ENCODE measurements at regions of chr7 and their contacts with region 1.

Region 1: DNA sequence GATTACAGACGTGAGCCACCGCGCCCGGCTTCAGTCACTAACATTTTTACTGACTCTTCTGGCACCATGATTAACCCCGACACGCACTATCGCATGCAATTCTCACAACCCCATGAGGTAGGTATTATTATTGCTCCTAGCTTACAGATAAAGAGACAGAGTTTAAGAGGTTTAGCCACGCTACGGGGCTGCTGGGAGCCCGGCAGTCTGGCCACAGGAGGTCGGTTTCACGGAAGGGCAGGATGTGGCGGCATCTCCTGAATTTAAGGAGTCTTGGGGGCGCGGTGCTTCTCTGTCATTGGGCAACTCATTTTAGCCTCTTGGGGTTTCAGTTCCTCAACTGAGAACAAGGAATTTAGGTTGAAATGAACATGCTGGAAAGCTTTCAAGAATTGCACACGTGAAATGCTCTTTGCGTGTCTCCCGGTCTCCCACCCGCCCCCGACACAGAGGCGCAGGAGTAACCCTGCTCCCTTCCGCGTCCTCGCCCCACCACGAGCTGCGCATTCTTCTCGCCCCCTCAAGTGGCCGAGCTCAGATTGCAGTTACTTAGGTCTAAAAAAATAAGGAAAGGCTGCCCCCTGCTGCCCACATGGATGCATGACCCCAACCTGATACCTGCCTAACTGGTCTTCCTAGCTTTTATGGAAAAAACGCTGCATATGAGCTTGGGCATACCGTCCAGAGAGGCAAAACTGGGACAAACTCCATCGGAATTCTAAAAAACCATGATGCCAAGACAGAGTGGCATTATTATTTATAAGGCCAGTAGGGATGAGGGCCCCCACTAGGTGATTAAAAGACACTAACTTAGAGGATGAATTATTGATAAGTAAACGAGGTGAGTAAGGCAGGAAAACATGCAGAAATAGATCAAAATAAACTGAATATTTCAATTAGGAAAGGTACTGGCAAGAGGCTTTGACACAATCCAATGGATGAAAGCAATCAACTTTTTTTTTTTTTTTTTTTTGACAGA is 12.4 kb downstream of the PRSS2 start:
- DNase-seq: peak; percentile 88 to 93
- H3K4me3 ChIP-seq: peak overlapping the region; percentile 41; the same call in 1 of the 2 replicates
- H3K27ac ChIP-seq: no peak overlapping the region
- H3K4me1 ChIP-seq: peaks cover 10% of the 10 kb centered on the region
- H3K27me3 ChIP-seq: no peaks in the 10 kb centered on the region
- CTCF ChIP-seq: peak; percentile 99

Region 2: GRCh38 chr7:142357953-142358520 is 425.2 kb before region 1 on chr7:
- CTCF ChIA-PET with region 1: interaction called, 5 read pairs
- POLR2A ChIA-PET with region 1: no interaction called
- intact Hi-C with region 1: loop called (anchors 1 kb)
- DNase-seq: peak; percentile 71 to 75
- H3K4me3 ChIP-seq: peak overlapping the region; percentile 27; the same call in 1 of the 2 replicates
- H3K27ac ChIP-seq: peak overlapping the region; percentile 0; the same call in 1 of the 2 replicates
- H3K4me1 ChIP-seq: peaks cover 28% of the 10 kb centered on the region
- H3K27me3 ChIP-seq: no peaks in the 10 kb centered on the region
- CTCF ChIP-seq: peak; percentile 98

Region 3: GRCh38 chr7:142478479-142479072 is 304.6 kb before region 1 on chr7:
- CTCF ChIA-PET with region 1: interaction called, 17 read pairs
- POLR2A ChIA-PET with region 1: no interaction called
- intact Hi-C with region 1: loop called (anchors 1 kb)
- DNase-seq: peak; percentile 58 to 74
- H3K4me3 ChIP-seq: no peak overlapping the region
- H3K27ac ChIP-seq: no peak overlapping the region
- H3K4me1 ChIP-seq: peaks cover 16% of the 10 kb centered on the region
- H3K27me3 ChIP-seq: no peaks in the 10 kb centered on the region
- CTCF ChIP-seq: peak; percentile 91

Region 4: DNA sequence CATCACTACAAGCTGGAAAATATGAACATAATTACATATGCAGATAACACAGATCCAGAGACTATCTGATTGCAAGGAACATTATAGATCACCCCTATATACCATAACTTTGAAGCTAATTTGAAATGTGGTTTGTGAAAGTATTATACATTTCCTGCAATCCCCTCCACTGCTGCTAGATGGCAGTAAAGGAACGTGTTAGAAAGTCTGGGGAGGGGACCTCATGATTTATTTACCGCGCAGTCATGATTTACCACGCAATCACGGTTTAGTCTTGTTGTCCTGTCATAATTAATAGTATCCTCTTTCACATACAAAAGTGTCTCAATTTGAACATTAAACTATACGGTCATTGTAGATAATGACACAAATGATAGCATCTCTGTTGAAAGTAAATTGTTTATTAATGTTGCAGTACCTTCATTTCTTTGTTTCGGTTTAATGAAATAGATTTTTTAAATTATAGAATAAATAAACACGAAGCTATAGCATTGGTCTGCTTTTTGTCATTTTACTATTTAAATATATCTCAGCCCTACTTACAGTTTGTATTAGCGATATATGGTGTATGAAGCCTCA is 179.3 kb before region 1 on chr7:
- CTCF ChIA-PET with region 1: interaction called, 7 read pairs
- POLR2A ChIA-PET with region 1: no interaction called
- intact Hi-C with region 1: loop called (anchors 1 kb)
- DNase-seq: peak; percentile 51 to 65
- H3K4me3 ChIP-seq: peak overlapping the region; percentile 25; the same call in 1 of the 2 replicates
- H3K27ac ChIP-seq: no peak overlapping the region
- H3K4me1 ChIP-seq: peaks cover 18% of the 10 kb centered on the region
- H3K27me3 ChIP-seq: no peaks in the 10 kb centered on the region
- CTCF ChIP-seq: peak; percentile 97

Region 5: DNA sequence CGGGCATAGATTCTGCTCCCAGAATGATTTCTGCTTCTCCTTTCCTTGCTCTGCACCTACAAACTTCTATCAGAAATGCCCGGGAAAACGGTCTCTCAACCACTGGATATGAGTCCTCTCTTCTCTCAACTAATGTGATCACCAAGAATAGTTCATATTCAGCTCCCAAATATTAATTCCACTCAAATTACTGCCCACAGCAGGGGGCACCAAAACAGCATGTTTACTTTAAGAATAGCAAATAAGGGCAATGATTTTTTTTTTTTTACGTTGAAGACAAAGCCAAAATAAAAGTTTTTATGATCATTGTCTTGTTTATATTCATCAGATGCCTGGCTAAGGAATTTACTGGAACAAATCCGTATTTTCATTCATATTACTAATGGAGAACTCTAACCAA is 128.8 kb before region 1 on chr7:
- CTCF ChIA-PET with region 1: no interaction called
- POLR2A ChIA-PET with region 1: no interaction called
- intact Hi-C with region 1: no loop called
- DNase-seq: no peak
- H3K4me3 ChIP-seq: no peak overlapping the region
- H3K27ac ChIP-seq: no peak overlapping the region
- H3K4me1 ChIP-seq: no peaks in the 10 kb centered on the region
- H3K27me3 ChIP-seq: no peaks in the 10 kb centered on the region
- CTCF ChIP-seq: 0 out of 2 replicates have a peak, but pooled peaks have one; percentile 27

Region 6: GRCh38 chr7:142760071-142760642 is 23.1 kb before region 1 on chr7:
- CTCF ChIA-PET with region 1: no interaction called
- POLR2A ChIA-PET with region 1: no interaction called
- intact Hi-C with region 1: no loop called
- DNase-seq: peak; percentile 55 to 94
- H3K4me3 ChIP-seq: no peak overlapping the region
- H3K27ac ChIP-seq: peak overlapping the region; percentile 65
- H3K4me1 ChIP-seq: peaks cover 22% of the 10 kb centered on the region
- H3K27me3 ChIP-seq: no peaks in the 10 kb centered on the region
- CTCF ChIP-seq: no peak

Region 7: GRCh38 chr7:142811154-142811737 is 28.0 kb after region 1 on chr7:
- CTCF ChIA-PET with region 1: interaction called, 41 read pairs
- POLR2A ChIA-PET with region 1: interaction called, 31 read pairs
- intact Hi-C with region 1: loop called (anchors 1 kb)
- DNase-seq: peak; percentile 22 to 78
- H3K4me3 ChIP-seq: no peak overlapping the region
- H3K27ac ChIP-seq: peak overlapping the region; percentile 96
- H3K4me1 ChIP-seq: peaks cover 84% of the 10 kb centered on the region
- H3K27me3 ChIP-seq: no peaks in the 10 kb centered on the region
- CTCF ChIP-seq: peak; percentile 95

Region 8: GRCh38 chr7:143263266-143264195 is 480.3 kb after region 1 on chr7 and contains the start of gene GSTK1:
- CTCF ChIA-PET with region 1: no interaction called
- POLR2A ChIA-PET with region 1: interaction called, 18 read pairs
- intact Hi-C with region 1: no loop called
- DNase-seq: peak; percentile 68 to 81
- H3K4me3 ChIP-seq: peak within 1 kb of the TSS; percentile 90
- H3K27ac ChIP-seq: peak within 1 kb of the TSS; percentile 36
- H3K4me1 ChIP-seq: peaks cover 48% of the 10 kb centered on the region
- H3K27me3 ChIP-seq: no peaks in the 10 kb centered on the region
- CTCF ChIP-seq: no peak
- total RNA-seq, gene GSTK1: 239 and 244 TPM in 2 replicates

Measured in PC-9 (cell line).